GM12878 (cell line): ENCODE measurements at regions of chr12 and their contacts with region 1.

Region 1: GRCh38 chr12:58443273-58443980 is 476.9 kb downstream of the LRIG3 start:
- DNase-seq: no peak
- ATAC-seq: peak; percentile 85
- H3K4me3 ChIP-seq: no peak overlapping the region
- H3K27ac ChIP-seq: no peak overlapping the region
- H3K4me1 ChIP-seq: no peaks in the 10 kb centered on the region
- H3K27me3 ChIP-seq: no peaks in the 10 kb centered on the region
- CTCF ChIP-seq: peak; percentile 62 to 71 (median 65); a peak in 5 of 6 replicates
- EP300 ChIP-seq: no peak
- POLR2A ChIP-seq: no peak
- RAD21 ChIP-seq: peak; percentile 70

Region 2: DNA sequence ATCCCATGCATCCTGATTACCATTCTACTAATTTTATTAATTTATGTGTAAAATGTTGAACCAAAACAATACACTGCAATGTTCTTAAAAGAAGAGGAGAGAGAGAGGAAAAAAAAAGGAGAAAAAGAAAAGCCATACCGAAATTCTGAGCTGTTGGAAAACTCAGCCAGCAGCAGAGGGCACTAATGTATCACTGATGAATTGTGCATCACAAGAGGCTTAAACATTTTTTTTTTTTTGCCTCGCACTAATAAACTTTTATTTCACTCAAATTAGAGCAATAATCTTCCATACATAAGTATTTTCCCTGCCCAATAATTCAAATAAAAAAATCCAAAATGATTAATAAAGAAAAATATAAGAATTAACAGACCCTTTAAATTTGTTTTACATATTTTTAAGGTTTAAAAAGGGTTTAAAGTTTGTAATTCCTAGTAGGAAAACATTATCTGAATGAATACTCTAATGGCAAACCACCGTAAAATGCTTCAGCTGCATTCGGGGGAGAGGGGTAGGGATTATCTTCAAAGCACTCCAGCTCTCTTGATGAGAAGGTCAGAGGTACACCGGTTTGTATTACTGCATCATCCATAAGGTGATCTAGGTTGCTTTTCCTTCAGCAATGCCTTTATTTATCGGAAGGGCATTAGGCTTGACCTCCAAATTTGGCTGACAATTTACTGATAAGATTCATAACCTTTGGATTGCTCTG is 460.1 kb before region 1 on chr12:
- CTCF ChIA-PET with region 1: interaction called, 4 read pairs
- POLR2A ChIA-PET with region 1: no interaction called
- RAD21 ChIA-PET with region 1: no interaction called
- SMC1A ChIA-PET with region 1: no interaction called
- in situ Hi-C with region 1: no loop called
- intact Hi-C with region 1: loop called (anchors 5 kb)
- DNase-seq: no peak
- ATAC-seq: no peak
- H3K4me3 ChIP-seq: no peak overlapping the region
- H3K27ac ChIP-seq: no peak overlapping the region
- H3K4me1 ChIP-seq: no peaks in the 10 kb centered on the region
- H3K27me3 ChIP-seq: no peaks in the 10 kb centered on the region; a peak in 1 of 4 replicates
- CTCF ChIP-seq: peak; percentile 35 to 58 (median 42); a peak in 5 of 6 replicates
- EP300 ChIP-seq: no peak
- POLR2A ChIP-seq: no peak
- RAD21 ChIP-seq: peak; percentile 77

Region 3: DNA sequence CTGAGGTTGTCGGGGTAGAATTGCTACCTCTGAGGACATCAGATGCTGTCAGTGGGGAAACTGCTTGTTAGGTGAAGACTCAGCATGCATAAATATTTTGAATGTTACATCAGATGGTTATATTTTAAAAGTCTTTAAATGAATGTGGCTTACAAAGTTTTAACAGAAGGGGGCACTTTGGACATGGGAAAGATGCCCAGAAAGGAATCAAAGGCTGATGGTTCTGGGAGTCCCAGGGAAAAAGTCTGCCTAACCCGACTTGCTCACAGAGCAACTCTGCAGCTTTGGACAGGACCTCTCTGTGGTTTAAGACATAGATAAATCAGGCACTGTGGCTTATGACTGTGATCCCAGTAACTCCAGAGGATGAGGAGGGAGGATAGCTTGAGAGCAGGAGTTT is 27.2 kb before region 1 on chr12:
- CTCF ChIA-PET with region 1: interaction called, 11 read pairs
- POLR2A ChIA-PET with region 1: no interaction called
- RAD21 ChIA-PET with region 1: interaction called, 6 read pairs
- SMC1A ChIA-PET with region 1: interaction called, 5 read pairs
- in situ Hi-C with region 1: no loop called
- intact Hi-C with region 1: no loop called
- DNase-seq: no peak
- ATAC-seq: no peak
- H3K4me3 ChIP-seq: no peak overlapping the region
- H3K27ac ChIP-seq: no peak overlapping the region
- H3K4me1 ChIP-seq: no peaks in the 10 kb centered on the region
- H3K27me3 ChIP-seq: no peaks in the 10 kb centered on the region; a peak in 1 of 4 replicates
- CTCF ChIP-seq: no peak; a peak in 1 of 6 replicates
- EP300 ChIP-seq: no peak
- POLR2A ChIP-seq: no peak
- RAD21 ChIP-seq: peak; percentile 29; the same call in 1 of the 2 replicates

Region 4: DNA sequence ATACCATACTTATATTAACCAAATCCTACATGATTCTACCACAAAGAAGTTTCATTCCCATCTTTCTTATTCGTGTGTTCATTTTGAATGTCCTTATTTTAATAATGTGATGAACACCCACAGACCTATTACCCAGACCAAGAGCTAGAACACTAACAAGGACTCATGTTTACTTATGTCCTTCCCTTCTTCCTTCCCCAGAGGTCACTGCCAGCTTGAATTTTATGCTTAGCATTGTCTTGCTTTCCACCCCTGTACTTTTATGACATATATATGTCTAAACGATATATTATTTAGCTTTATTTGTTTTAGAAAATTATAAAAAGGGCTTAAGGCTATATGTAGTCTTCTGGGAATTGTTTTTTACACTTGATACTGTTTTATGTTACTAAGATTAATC is 238.3 kb after region 1 on chr12:
- CTCF ChIA-PET with region 1: no interaction called
- POLR2A ChIA-PET with region 1: no interaction called
- RAD21 ChIA-PET with region 1: no interaction called
- SMC1A ChIA-PET with region 1: no interaction called
- in situ Hi-C with region 1: no loop called
- intact Hi-C with region 1: no loop called
- DNase-seq: no peak
- ATAC-seq: no peak
- H3K4me3 ChIP-seq: no peak overlapping the region
- H3K27ac ChIP-seq: no peak overlapping the region
- H3K4me1 ChIP-seq: no peaks in the 10 kb centered on the region
- H3K27me3 ChIP-seq: no peaks in the 10 kb centered on the region
- CTCF ChIP-seq: no peak
- EP300 ChIP-seq: no peak
- POLR2A ChIP-seq: no peak
- RAD21 ChIP-seq: no peak